CD4-positive, alpha-beta T cell (primary cell): ENCODE measurements at regions of chrX and their contacts with region 1.

Region 1: GRCh38 chrX:120680090-120680489 is 50.2 kb upstream of the C1GALT1C1 start:
- DNase-seq: no peak
- ATAC-seq: no peak
- H3K4me3 ChIP-seq: no peak overlapping the region
- H3K4me3 Mint-ChIP-seq: peak overlapping the region; percentile 5
- H3K27ac ChIP-seq: no peak overlapping the region
- H3K27ac Mint-ChIP-seq: no peak overlapping the region
- H3K4me1 ChIP-seq: no peaks in the 10 kb centered on the region
- H3K4me1 Mint-ChIP-seq: peaks cover 9% of the 10 kb centered on the region
- H3K27me3 ChIP-seq: no peaks in the 10 kb centered on the region
- H3K27me3 Mint-ChIP-seq: no peaks in the 10 kb centered on the region
- CTCF ChIP-seq: no peak

Region 2: GRCh38 chrX:120761810-120762209 is 81.7 kb after region 1 on chrX:
- CTCF ChIA-PET with region 1: no interaction called
- POLR2A ChIA-PET with region 1: no interaction called
- intact Hi-C with region 1: loop called in 1 of 2 experiments (anchors 5 kb)
- DNase-seq: no peak
- ATAC-seq: no peak
- H3K4me3 ChIP-seq: no peak overlapping the region
- H3K4me3 Mint-ChIP-seq: no peak overlapping the region
- H3K27ac ChIP-seq: no peak overlapping the region
- H3K27ac Mint-ChIP-seq: no peak overlapping the region
- H3K4me1 ChIP-seq: no peaks in the 10 kb centered on the region
- H3K4me1 Mint-ChIP-seq: peaks cover 9% of the 10 kb centered on the region
- H3K27me3 ChIP-seq: no peaks in the 10 kb centered on the region
- H3K27me3 Mint-ChIP-seq: no peaks in the 10 kb centered on the region
- CTCF ChIP-seq: no peak

Region 3: DNA sequence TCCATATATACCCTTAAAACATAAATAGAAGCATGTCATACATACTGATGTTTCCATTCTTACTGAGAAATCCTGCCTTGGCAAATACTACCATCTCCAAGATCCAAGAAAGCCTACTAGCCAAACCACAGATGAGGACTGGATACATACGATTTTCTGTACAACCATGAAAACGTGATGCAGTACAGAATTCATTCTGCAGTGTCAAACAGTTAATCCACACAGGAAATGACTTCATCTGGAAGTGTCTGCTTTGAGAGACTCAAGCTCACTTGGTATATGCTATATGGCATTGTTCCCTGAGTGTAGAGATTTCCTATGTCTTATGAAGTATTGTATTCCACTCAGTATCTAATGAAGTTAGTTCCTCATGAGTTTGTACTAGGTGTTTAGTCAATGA is 101.3 kb after region 1 on chrX:
- CTCF ChIA-PET with region 1: no interaction called
- POLR2A ChIA-PET with region 1: no interaction called
- intact Hi-C with region 1: no loop called
- DNase-seq: no peak
- ATAC-seq: no peak
- H3K4me3 ChIP-seq: no peak overlapping the region
- H3K4me3 Mint-ChIP-seq: no peak overlapping the region
- H3K27ac ChIP-seq: no peak overlapping the region
- H3K27ac Mint-ChIP-seq: no peak overlapping the region
- H3K4me1 ChIP-seq: no peaks in the 10 kb centered on the region
- H3K4me1 Mint-ChIP-seq: no peaks in the 10 kb centered on the region
- H3K27me3 ChIP-seq: no peaks in the 10 kb centered on the region
- H3K27me3 Mint-ChIP-seq: no peaks in the 10 kb centered on the region
- CTCF ChIP-seq: no peak